CD4-positive, alpha-beta T cell (primary cell): ENCODE measurements at regions of chr2 and their contacts with region 1.

Region 1: GRCh38 chr2:230347659-230348305 is 20.8 kb downstream of the SP140L start:
- DNase-seq: peak in 3 of 14 experiments; percentile 37 to 52 (median 51)
- ATAC-seq: no peak
- H3K4me3 ChIP-seq: no peak overlapping the region
- H3K4me3 Mint-ChIP-seq: peak overlapping the region; percentile 6
- H3K27ac ChIP-seq: peak overlapping the region in 1 of 2 donors; percentile 20
- H3K27ac Mint-ChIP-seq: peak overlapping the region; percentile 70
- H3K4me1 ChIP-seq: peaks cover 14% of the 10 kb centered on the region
- H3K4me1 Mint-ChIP-seq: peaks cover 82% of the 10 kb centered on the region
- H3K27me3 ChIP-seq: no peaks in the 10 kb centered on the region
- H3K27me3 Mint-ChIP-seq: no peaks in the 10 kb centered on the region
- CTCF ChIP-seq: no peak

Region 2: DNA sequence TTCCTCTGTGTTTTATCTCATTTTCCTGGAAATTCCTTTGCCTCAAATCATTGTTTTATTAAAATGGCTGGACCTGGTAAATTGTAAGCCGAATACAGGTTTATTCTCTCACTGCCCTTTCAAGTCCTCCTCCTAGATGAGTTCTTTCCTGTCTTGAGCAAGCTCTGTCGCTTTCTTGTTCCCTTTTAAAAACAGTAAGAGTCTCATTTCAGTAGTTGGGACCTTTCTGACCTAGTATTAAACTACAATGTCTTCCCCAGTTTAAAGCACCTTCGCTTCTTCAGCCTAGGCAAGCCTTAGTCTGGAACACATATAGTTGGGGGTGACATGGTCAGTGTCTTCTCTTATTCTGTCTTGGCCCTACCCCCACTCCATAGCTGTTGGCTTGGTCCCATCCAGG is 61.7 kb before region 1 on chr2:
- CTCF ChIA-PET with region 1: no interaction called
- POLR2A ChIA-PET with region 1: no interaction called
- intact Hi-C with region 1: no loop called
- DNase-seq: no peak
- ATAC-seq: no peak
- H3K4me3 ChIP-seq: no peak overlapping the region
- H3K4me3 Mint-ChIP-seq: no peak overlapping the region
- H3K27ac ChIP-seq: no peak overlapping the region
- H3K27ac Mint-ChIP-seq: no peak overlapping the region
- H3K4me1 ChIP-seq: no peaks in the 10 kb centered on the region
- H3K4me1 Mint-ChIP-seq: peaks cover 31% of the 10 kb centered on the region
- H3K27me3 ChIP-seq: no peaks in the 10 kb centered on the region
- H3K27me3 Mint-ChIP-seq: no peaks in the 10 kb centered on the region
- CTCF ChIP-seq: no peak

Region 3: DNA sequence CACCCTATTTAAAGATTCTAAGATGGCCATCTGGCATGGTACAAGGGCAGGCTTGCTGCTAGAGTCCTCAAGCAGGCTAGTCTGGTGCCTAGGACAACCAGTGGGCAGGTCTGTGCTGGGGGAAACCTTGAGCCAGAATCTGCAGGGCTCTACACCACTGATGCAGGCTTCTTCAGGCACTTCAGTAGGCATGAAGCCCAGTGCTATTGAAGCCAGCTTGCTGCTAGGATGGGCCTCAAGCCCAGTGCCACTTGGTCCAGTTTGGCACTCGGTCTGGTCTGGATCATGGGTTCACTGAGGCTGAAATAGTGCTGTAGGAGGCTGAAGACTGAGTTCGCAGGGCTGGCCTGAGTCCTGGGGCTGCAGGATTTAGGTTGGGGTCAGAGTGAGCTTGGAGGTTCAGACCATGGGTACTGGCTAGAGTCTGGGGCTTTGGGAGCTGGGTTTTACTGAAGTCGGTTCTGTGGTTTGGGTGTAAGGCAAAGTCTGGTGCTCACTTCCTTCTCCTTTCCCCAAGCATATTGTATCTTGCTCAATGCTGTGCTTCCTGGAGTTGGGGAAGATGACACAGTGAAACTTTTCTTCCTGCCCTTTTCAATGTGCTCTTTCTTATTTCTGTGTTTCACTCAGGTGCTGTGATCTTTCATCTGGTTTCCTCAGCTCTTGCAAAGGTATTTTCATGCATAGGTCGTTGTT is 109.4 kb after region 1 on chr2:
- CTCF ChIA-PET with region 1: no interaction called
- POLR2A ChIA-PET with region 1: no interaction called
- intact Hi-C with region 1: no loop called
- DNase-seq: peak in 3 of 14 experiments; percentile 16 to 50 (median 40)
- ATAC-seq: peak; percentile 41
- H3K4me3 ChIP-seq: no peak overlapping the region
- H3K4me3 Mint-ChIP-seq: no peak overlapping the region
- H3K27ac ChIP-seq: peak overlapping the region in 1 of 2 donors; percentile 39
- H3K27ac Mint-ChIP-seq: peak overlapping the region; percentile 27
- H3K4me1 ChIP-seq: peaks cover 9% of the 10 kb centered on the region
- H3K4me1 Mint-ChIP-seq: peaks cover 73% of the 10 kb centered on the region
- H3K27me3 ChIP-seq: no peaks in the 10 kb centered on the region
- H3K27me3 Mint-ChIP-seq: no peaks in the 10 kb centered on the region
- CTCF ChIP-seq: no peak

Region 4: GRCh38 chr2:231411831-231412617 is 1064.2 kb after region 1 on chr2:
- CTCF ChIA-PET with region 1: no interaction called
- POLR2A ChIA-PET with region 1: no interaction called
- intact Hi-C with region 1: loop called in 1 of 2 experiments (anchors 10 kb)
- DNase-seq: peak in 13 of 14 experiments; percentile 11 to 69 (median 58)
- ATAC-seq: peak; percentile 94
- H3K4me3 ChIP-seq: no peak overlapping the region
- H3K4me3 Mint-ChIP-seq: peak overlapping the region; percentile 80
- H3K27ac ChIP-seq: no peak overlapping the region
- H3K27ac Mint-ChIP-seq: no peak overlapping the region
- H3K4me1 ChIP-seq: peaks cover 6% of the 10 kb centered on the region
- H3K4me1 Mint-ChIP-seq: peaks cover 1% of the 10 kb centered on the region
- H3K27me3 ChIP-seq: peaks cover 37 to 38% of the 10 kb centered on the region in 2 experiments
- H3K27me3 Mint-ChIP-seq: peaks cover 41% of the 10 kb centered on the region
- CTCF ChIP-seq: peak; percentile 44